CD4-positive, alpha-beta T cell (primary cell): ENCODE measurements at regions of chr6 and their contacts with region 1.

Region 1: GRCh38 chr6:27177485-27178406 is 69.8 kb upstream of the PRSS16 start:
- DNase-seq: peak; percentile 44 to 90 (median 64)
- ATAC-seq: peak; percentile 64
- H3K4me3 ChIP-seq: peak overlapping the region; percentile 89
- H3K4me3 Mint-ChIP-seq: peak overlapping the region; percentile 99
- H3K27ac ChIP-seq: peak overlapping the region; percentile 27 to 63
- H3K27ac Mint-ChIP-seq: peak overlapping the region; percentile 100
- H3K4me1 ChIP-seq: peaks cover 21% of the 10 kb centered on the region
- H3K4me1 Mint-ChIP-seq: peaks cover 24% of the 10 kb centered on the region
- H3K27me3 ChIP-seq: no peaks in the 10 kb centered on the region
- H3K27me3 Mint-ChIP-seq: peaks cover 24% of the 10 kb centered on the region
- CTCF ChIP-seq: peak; percentile 54

Region 2: GRCh38 chr6:27126815-27127537 is 50.8 kb before region 1 on chr6:
- CTCF ChIA-PET with region 1: interaction called, 20 read pairs
- POLR2A ChIA-PET with region 1: interaction called, 15 read pairs
- intact Hi-C with region 1: no loop called
- DNase-seq: peak; percentile 65 to 93 (median 76)
- ATAC-seq: peak; percentile 75
- H3K4me3 ChIP-seq: peak overlapping the region; percentile 39
- H3K4me3 Mint-ChIP-seq: peak overlapping the region; percentile 84
- H3K27ac ChIP-seq: no peak overlapping the region
- H3K27ac Mint-ChIP-seq: peak overlapping the region; percentile 65
- H3K4me1 ChIP-seq: peaks cover 17% of the 10 kb centered on the region
- H3K4me1 Mint-ChIP-seq: peaks cover 28% of the 10 kb centered on the region
- H3K27me3 ChIP-seq: no peaks in the 10 kb centered on the region
- H3K27me3 Mint-ChIP-seq: no peaks in the 10 kb centered on the region
- CTCF ChIP-seq: peak; percentile 95

Region 3: GRCh38 chr6:27188885-27189418 is 11.2 kb after region 1 on chr6:
- CTCF ChIA-PET with region 1: interaction called, 4 read pairs
- POLR2A ChIA-PET with region 1: interaction called, 11 read pairs
- intact Hi-C with region 1: no loop called
- DNase-seq: peak in 9 of 14 experiments; percentile 28 to 86 (median 39)
- ATAC-seq: peak; percentile 85
- H3K4me3 ChIP-seq: peak overlapping the region; percentile 66
- H3K4me3 Mint-ChIP-seq: peak overlapping the region; percentile 88
- H3K27ac ChIP-seq: no peak overlapping the region
- H3K27ac Mint-ChIP-seq: peak overlapping the region; percentile 3
- H3K4me1 ChIP-seq: peaks cover 18% of the 10 kb centered on the region
- H3K4me1 Mint-ChIP-seq: peaks cover 13% of the 10 kb centered on the region
- H3K27me3 ChIP-seq: no peaks in the 10 kb centered on the region
- H3K27me3 Mint-ChIP-seq: peaks cover 9% of the 10 kb centered on the region
- CTCF ChIP-seq: peak; percentile 85

Region 4: GRCh38 chr6:27318973-27319372 is 141.2 kb after region 1 on chr6:
- CTCF ChIA-PET with region 1: no interaction called
- POLR2A ChIA-PET with region 1: no interaction called
- intact Hi-C with region 1: no loop called
- DNase-seq: no peak
- ATAC-seq: no peak
- H3K4me3 ChIP-seq: no peak overlapping the region
- H3K4me3 Mint-ChIP-seq: no peak overlapping the region
- H3K27ac ChIP-seq: no peak overlapping the region
- H3K27ac Mint-ChIP-seq: no peak overlapping the region
- H3K4me1 ChIP-seq: no peaks in the 10 kb centered on the region
- H3K4me1 Mint-ChIP-seq: no peaks in the 10 kb centered on the region
- H3K27me3 ChIP-seq: peaks cover 4 to 26% of the 10 kb centered on the region in 2 experiments
- H3K27me3 Mint-ChIP-seq: peaks cover 63% of the 10 kb centered on the region
- CTCF ChIP-seq: no peak

Region 5: GRCh38 chr6:27518881-27519795 is 341.4 kb after region 1 on chr6:
- CTCF ChIA-PET with region 1: interaction called, 3 read pairs
- POLR2A ChIA-PET with region 1: no interaction called
- intact Hi-C with region 1: loop called in 1 of 2 experiments (anchors 2 kb)
- DNase-seq: peak; percentile 33 to 89 (median 54)
- ATAC-seq: peak; percentile 84
- H3K4me3 ChIP-seq: peak overlapping the region; percentile 92
- H3K4me3 Mint-ChIP-seq: peak overlapping the region; percentile 91
- H3K27ac ChIP-seq: peak overlapping the region; percentile 17 to 76
- H3K27ac Mint-ChIP-seq: peak overlapping the region; percentile 89
- H3K4me1 ChIP-seq: peaks cover 12% of the 10 kb centered on the region
- H3K4me1 Mint-ChIP-seq: peaks cover 31% of the 10 kb centered on the region
- H3K27me3 ChIP-seq: peaks cover 7% of the 10 kb centered on the region in 2 experiments
- H3K27me3 Mint-ChIP-seq: peaks cover 28% of the 10 kb centered on the region
- CTCF ChIP-seq: peak; percentile 78

Region 6: GRCh38 chr6:27694545-27694870 is 516.8 kb after region 1 on chr6:
- CTCF ChIA-PET with region 1: no interaction called
- POLR2A ChIA-PET with region 1: no interaction called
- intact Hi-C with region 1: loop called in 1 of 2 experiments (anchors 5 kb)
- DNase-seq: no peak
- ATAC-seq: peak; percentile 26
- H3K4me3 ChIP-seq: peak overlapping the region; percentile 92
- H3K4me3 Mint-ChIP-seq: peak overlapping the region; percentile 95
- H3K27ac ChIP-seq: no peak overlapping the region
- H3K27ac Mint-ChIP-seq: peak overlapping the region; percentile 78
- H3K4me1 ChIP-seq: peaks cover 18% of the 10 kb centered on the region
- H3K4me1 Mint-ChIP-seq: peaks cover 39% of the 10 kb centered on the region
- H3K27me3 ChIP-seq: no peaks in the 10 kb centered on the region
- H3K27me3 Mint-ChIP-seq: no peaks in the 10 kb centered on the region
- CTCF ChIP-seq: no peak

Region 7: GRCh38 chr6:27772261-27773001 is 594.7 kb after region 1 on chr6:
- CTCF ChIA-PET with region 1: interaction called, 10 read pairs
- POLR2A ChIA-PET with region 1: no interaction called
- intact Hi-C with region 1: no loop called
- DNase-seq: peak; percentile 70 to 92 (median 82)
- ATAC-seq: peak; percentile 97
- H3K4me3 ChIP-seq: no peak overlapping the region
- H3K4me3 Mint-ChIP-seq: peak overlapping the region; percentile 36
- H3K27ac ChIP-seq: no peak overlapping the region
- H3K27ac Mint-ChIP-seq: no peak overlapping the region
- H3K4me1 ChIP-seq: peaks cover 9% of the 10 kb centered on the region
- H3K4me1 Mint-ChIP-seq: peaks cover 9% of the 10 kb centered on the region
- H3K27me3 ChIP-seq: peaks cover 0 to 10% of the 10 kb centered on the region in 2 experiments
- H3K27me3 Mint-ChIP-seq: peaks cover 18% of the 10 kb centered on the region
- CTCF ChIP-seq: peak; percentile 90